WTC11 (cell line): ENCODE measurements at regions of chrX and their contacts with region 1.

Region 1: GRCh38 chrX:130024127-130024526 is 41.7 kb downstream of the BCORL1 start:
- DNase-seq: peak; percentile 84
- ATAC-seq: peak; percentile 97
- H3K4me3 Mint-ChIP-seq: peak overlapping the region; percentile 22; the same call in 1 of the 2 replicates
- H3K27ac Mint-ChIP-seq: no peak overlapping the region
- H3K4me1 Mint-ChIP-seq: peaks cover 12% of the 10 kb centered on the region
- H3K27me3 Mint-ChIP-seq: no peaks in the 10 kb centered on the region
- CTCF ChIP-seq: no peak

Region 2: DNA sequence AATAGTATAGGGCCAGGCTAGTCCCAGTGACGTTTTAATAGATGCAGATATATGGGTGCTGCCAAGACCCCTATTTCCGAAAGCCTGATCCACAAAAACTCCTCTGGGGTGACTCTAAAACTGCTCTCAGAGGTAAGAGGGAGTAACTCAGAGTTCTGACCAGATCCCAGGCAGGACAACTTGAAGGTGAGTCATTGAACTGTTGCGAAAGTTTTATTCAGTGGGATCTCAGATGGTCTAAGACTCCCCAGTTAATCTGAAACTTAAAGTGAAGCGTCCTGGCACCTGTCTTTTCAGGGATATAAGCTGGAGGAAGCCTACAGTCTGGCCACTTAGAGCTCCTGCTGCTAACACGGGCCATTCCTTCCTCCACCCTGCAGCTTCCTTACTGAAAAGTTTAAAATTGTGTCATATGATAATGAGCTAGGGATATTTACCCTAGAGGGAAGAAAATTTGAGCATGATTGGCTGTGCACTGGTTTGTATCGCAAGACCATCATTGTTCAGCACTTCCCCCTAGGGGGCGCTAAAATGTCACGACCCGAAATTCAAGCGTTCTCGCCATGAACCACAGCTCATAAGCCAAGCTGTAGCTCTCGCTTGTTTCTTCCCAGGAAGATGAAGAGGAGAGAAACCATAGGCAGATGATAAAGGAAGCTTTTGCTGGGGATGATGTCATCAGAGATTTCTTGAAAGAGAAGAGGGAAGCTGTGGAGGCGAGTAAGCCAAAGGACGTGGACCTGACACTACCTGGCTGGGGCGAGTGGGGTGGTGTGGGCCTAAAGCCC is 98.6 kb before region 1 on chrX:
- CTCF ChIA-PET with region 1: interaction called, 10 read pairs
- POLR2A ChIA-PET with region 1: no interaction called
- DNase-seq: peak; percentile 66
- ATAC-seq: peak; percentile 73
- H3K4me3 Mint-ChIP-seq: no peak overlapping the region
- H3K27ac Mint-ChIP-seq: no peak overlapping the region
- H3K4me1 Mint-ChIP-seq: 0 out of 2 replicates have a peak, but pooled peaks cover under 1% of the 10 kb centered on the region
- H3K27me3 Mint-ChIP-seq: no peaks in the 10 kb centered on the region
- CTCF ChIP-seq: peak; percentile 54

Region 3: DNA sequence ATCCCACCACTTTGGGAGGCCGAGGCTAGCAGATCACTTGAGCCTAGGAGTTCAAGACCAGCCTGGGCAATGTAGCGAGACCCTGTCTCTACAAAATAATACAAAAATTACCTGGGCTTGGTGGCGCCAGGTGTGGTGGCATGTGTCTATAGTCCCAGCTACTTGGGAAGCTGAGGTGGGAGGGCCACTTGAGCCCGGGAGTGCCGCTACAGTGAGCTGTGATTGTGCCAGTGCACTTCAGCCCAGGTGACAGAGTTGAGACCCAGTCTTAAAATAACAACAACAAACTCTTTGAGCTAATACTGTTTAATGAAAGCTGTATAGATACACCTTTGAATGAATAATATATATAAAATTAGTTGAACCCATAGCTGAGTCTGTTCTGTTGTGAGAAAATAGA is 31.9 kb before region 1 on chrX:
- CTCF ChIA-PET with region 1: no interaction called
- POLR2A ChIA-PET with region 1: no interaction called
- DNase-seq: no peak
- ATAC-seq: no peak
- H3K4me3 Mint-ChIP-seq: no peak overlapping the region
- H3K27ac Mint-ChIP-seq: no peak overlapping the region
- H3K4me1 Mint-ChIP-seq: no peaks in the 10 kb centered on the region
- H3K27me3 Mint-ChIP-seq: no peaks in the 10 kb centered on the region; the same call in 1 of the 2 replicates
- CTCF ChIP-seq: no peak

Region 4: GRCh38 chrX:130039847-130040246 is 15.7 kb after region 1 on chrX:
- CTCF ChIA-PET with region 1: interaction called, 12 read pairs
- POLR2A ChIA-PET with region 1: no interaction called
- DNase-seq: no peak
- ATAC-seq: no peak
- H3K4me3 Mint-ChIP-seq: no peak overlapping the region
- H3K27ac Mint-ChIP-seq: no peak overlapping the region
- H3K4me1 Mint-ChIP-seq: no peaks in the 10 kb centered on the region
- H3K27me3 Mint-ChIP-seq: no peaks in the 10 kb centered on the region
- CTCF ChIP-seq: no peak